Panc1 (cell line): ENCODE measurements at regions of chr19 and their contacts with region 1.

Region 1: GRCh38 chr19:44530777-44531176 is 1.3 kb upstream of the CEACAM20 start:
- DNase-seq: no peak
- ATAC-seq: no peak
- H3K4me3 ChIP-seq: no peak overlapping the region
- H3K27ac ChIP-seq: no peak overlapping the region
- H3K4me1 ChIP-seq: no peaks in the 10 kb centered on the region
- H3K27me3 ChIP-seq: no peaks in the 10 kb centered on the region
- CTCF ChIP-seq: no peak

Region 2: DNA sequence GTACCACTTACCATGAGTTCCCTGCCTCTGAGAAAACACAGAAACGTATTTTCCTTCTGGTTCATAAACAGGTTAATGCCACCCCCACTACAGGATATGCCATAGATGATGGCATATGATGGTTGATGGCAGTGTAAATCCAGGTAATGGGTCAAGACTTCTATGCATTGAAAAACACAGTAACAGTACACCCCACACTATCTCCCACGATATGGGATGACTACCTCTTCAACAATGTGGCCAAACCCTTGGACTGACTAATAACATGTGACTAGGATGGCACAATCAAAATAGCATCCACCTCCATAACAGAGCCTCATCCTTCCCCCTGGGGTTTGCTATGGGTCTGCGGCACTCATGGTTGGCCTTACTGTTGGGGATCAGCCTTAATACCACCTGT is 247.9 kb before region 1 on chr19:
- CTCF ChIA-PET with region 1: no interaction called
- POLR2A ChIA-PET with region 1: no interaction called
- in situ Hi-C with region 1: no loop called
- intact Hi-C with region 1: no loop called
- DNase-seq: no peak
- ATAC-seq: no peak
- H3K4me3 ChIP-seq: no peak overlapping the region
- H3K27ac ChIP-seq: no peak overlapping the region
- H3K4me1 ChIP-seq: no peaks in the 10 kb centered on the region
- H3K27me3 ChIP-seq: no peaks in the 10 kb centered on the region
- CTCF ChIP-seq: no peak

Region 3: DNA sequence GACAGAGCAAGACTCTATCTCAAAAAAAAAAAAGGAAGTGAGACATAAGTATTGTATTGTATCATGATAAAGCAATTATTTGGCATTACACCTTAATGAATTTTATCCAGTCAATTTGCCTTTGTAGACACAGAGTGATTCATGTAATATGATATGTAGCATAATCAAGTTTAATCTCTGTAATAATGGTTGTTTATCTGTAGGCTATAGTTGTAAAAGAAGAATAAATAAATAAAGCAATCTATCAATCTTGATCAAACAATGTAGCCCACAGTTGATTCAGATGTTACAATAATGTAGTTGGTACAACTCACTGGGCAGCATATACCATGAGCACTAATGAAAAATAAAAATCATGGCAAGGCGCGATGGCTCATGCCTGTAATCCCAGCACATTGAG is 27.2 kb after region 1 on chr19:
- CTCF ChIA-PET with region 1: no interaction called
- POLR2A ChIA-PET with region 1: interaction called, 14 read pairs
- in situ Hi-C with region 1: no loop called
- intact Hi-C with region 1: no loop called
- DNase-seq: no peak
- ATAC-seq: no peak
- H3K4me3 ChIP-seq: no peak overlapping the region
- H3K27ac ChIP-seq: no peak overlapping the region
- H3K4me1 ChIP-seq: no peaks in the 10 kb centered on the region
- H3K27me3 ChIP-seq: no peaks in the 10 kb centered on the region
- CTCF ChIP-seq: no peak